ENCODE measurements at regions of chr2 and their contacts with region 1.

Region 1: DNA sequence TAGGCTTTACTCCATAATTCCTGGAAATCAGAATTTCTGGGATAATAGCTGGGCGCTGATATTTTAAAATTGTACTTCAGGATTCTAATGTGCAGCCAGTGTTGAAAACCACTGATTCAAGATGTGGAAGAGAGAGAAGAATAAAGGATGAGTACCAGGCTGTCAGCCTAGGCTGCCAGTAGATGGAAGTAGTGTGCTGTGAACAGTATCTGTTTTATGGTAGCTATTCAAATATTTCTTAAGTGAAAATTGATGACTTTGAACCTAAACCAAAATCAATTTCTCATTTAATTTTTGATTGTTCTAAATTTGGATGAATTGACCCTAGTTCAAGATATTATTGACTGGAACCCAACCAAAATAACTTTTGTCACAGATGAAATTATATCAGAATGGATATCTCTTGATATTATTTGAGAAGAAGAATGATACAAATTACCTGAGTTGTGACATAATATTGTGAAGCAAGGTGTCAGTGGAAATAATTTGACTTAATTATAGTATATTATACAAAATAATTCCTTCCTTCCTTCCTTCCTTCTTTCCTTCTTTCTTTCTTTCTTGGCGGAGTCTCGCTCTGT is 88.1 kb downstream of the COMMD1 start:
- DNase-seq: no peak
- H3K4me3 ChIP-seq: no peak overlapping the region
- H3K27ac ChIP-seq: no peak overlapping the region
- H3K4me1 ChIP-seq: peaks cover 26% of the 10 kb centered on the region
- H3K27me3 ChIP-seq: no peaks in the 10 kb centered on the region
- CTCF ChIP-seq: peak; percentile 79

Region 2: DNA sequence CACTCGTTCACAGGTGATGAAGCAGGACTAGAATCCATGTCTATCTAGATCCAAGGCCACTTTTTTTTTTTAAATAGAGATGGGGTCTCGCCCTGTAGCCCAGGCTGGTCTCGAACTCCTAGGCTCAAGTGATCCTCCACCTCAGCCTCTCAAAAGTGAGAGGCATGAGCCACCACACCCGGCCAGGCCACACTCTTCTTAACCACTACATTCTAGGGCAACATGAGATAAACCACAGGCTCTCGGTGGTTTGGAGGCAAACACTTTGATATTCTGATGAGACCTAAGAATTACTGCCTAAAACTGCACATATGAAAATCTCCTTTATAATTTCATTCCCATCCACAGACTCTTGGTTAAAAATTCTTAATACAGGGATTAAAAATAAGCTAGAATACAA is 574.4 kb before region 1 on chr2:
- intact Hi-C with region 1: no loop called
- DNase-seq: no peak
- H3K4me3 ChIP-seq: no peak overlapping the region
- H3K27ac ChIP-seq: no peak overlapping the region
- H3K4me1 ChIP-seq: peaks cover 65% of the 10 kb centered on the region
- H3K27me3 ChIP-seq: no peaks in the 10 kb centered on the region
- CTCF ChIP-seq: no peak

Region 3: DNA sequence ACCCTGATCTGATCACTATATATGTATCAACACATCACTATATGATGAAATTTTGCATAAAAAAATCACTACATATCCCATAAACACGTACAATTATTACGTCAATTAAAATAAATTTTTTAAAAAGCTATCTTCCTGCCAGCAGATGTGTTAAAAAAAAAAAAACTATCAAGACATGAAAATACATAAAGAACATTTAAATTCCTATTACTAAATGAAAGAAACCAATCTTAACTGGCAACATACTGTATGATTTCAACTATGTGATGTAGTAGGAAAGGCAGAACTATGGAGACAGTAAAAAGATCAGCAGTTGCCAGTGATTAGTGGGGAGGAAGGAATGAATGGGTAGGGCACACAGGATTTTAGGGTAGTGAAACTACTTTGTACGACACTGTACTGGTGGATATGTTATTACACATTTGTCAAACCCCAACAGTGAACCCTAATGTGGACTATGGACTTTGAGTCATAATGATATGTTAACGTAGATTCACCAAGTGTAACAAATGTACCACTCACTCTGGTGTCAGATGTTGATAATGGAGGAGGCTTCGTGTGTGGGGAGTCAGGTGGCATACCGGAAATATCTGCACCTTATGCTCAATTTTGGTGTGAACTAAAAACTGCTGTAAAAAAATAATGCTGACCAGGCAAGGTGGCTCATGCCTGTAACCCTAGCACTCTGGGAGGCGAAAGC is 550.0 kb before region 1 on chr2:
- intact Hi-C with region 1: no loop called
- DNase-seq: no peak
- H3K4me3 ChIP-seq: no peak overlapping the region
- H3K27ac ChIP-seq: no peak overlapping the region
- H3K4me1 ChIP-seq: peaks cover 75% of the 10 kb centered on the region
- H3K27me3 ChIP-seq: no peaks in the 10 kb centered on the region
- CTCF ChIP-seq: no peak

Region 4: DNA sequence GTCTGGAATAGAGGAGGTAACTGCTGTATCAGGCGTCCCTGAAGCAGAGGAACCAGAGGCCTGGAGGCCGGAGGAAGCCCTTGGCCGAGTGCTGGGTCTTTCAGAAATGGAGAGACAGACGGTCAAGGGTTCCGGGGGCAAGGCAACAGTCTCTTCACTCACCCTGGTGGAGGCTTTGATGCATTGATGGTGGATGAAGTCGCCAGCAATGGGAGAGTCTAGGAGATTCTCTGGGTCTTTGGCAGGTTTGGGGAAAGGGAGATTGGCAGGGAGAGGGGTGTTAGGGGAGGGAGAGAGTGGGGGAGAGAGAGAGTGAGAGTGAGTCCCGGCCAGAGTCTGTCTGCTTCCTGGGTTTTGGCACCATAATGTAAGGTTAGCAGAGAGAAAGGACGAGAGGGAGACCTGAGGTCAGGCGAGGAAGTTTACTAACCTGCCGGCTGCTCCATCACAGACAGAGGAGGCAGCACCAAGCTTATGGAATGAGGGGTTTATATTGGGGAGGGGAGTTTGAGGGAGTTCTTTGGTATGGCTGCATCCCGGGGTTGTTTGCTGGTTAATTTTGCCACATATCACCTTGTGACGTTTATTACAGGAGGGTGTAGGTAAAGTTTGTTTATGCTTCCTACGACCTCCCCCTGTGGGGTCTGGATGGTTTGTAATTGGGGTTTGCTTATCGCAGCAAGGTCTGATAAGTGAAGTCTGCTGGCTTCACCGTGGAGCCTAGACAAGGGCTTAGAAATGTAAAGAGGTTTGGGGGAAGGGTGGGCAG is 68.5 kb before region 1 on chr2:
- intact Hi-C with region 1: loop called (anchors 5 kb)
- DNase-seq: no peak
- H3K4me3 ChIP-seq: no peak overlapping the region
- H3K27ac ChIP-seq: no peak overlapping the region
- H3K4me1 ChIP-seq: peaks cover 47% of the 10 kb centered on the region
- H3K27me3 ChIP-seq: no peaks in the 10 kb centered on the region
- CTCF ChIP-seq: no peak